Left ventricle myocardium superior (tissue), 1 donor: ENCODE measurements at regions of chr1 and their contacts with region 1.

Region 1: DNA sequence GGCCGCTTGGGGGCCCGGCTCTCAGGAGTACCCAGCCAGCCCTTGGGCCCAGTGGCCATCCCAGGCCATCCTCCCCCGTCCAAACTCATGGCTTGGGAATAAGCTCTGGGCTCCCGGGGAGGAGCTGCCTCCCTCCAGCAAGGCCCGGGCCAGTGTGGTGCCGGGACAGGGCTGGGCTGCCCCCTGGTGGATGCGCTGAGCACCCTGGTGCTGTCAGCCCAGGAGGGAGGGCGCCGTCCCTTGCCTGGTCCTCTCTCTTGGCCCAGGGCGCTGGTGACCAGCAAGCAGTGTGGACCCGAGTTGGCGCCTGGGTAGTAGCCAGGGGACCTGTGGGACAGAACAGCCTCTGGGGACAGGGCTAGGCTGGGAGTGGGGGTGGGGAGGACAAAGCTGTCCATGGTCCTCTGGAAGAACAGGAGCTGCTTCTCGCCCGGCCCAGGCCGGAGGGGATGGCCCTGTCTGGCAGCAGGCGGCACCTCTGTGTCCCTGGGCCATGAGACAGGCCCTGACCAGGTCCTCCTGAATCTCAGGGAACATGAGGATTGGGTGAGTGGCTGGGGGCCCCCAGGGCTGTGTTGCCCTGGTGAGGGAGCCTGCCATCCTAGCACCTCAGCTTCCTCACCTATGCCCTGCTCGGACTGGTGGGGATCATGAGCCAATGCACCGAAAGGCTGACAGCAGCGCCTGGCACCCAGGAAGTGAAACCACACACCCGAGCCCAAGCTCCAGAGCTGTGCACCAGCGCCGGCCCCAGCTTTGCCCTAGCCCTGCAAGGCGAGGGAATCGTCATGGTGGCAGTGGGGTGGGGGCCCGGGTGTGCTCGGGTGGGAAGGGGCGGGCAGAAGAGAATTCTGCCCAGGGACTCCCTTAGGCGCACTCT is 9.4 kb downstream of the MORN1 start:
- DNase-seq: peak; percentile 91
- ATAC-seq: peak; percentile 97

Region 2: GRCh38 chr1:2194898-2195673 is 186.9 kb before region 1 on chr1:
- intact Hi-C with region 1: loop called (anchors 5 kb)
- DNase-seq: peak; percentile 95
- ATAC-seq: peak; percentile 80